ENCODE measurements at regions of chr11 and their contacts with region 1.

Region 1: GRCh38 chr11:77091146-77091940 is 11.3 kb upstream of the OMP start:
- DNase-seq: no peak
- H3K4me3 ChIP-seq: no peak overlapping the region
- H3K27me3 ChIP-seq: no peaks in the 10 kb centered on the region
- CTCF ChIP-seq: peak; percentile 93

Region 2: GRCh38 chr11:77039491-77040400 is 51.6 kb before region 1 on chr11:
- CTCF ChIA-PET with region 1: interaction called, 50 read pairs
- POLR2A ChIA-PET with region 1: no interaction called
- DNase-seq: no peak
- H3K4me3 ChIP-seq: peak overlapping the region; percentile 38
- H3K27me3 ChIP-seq: peaks cover 7% of the 10 kb centered on the region
- CTCF ChIP-seq: peak; percentile 69

Region 3: GRCh38 chr11:77053217-77054015 is 37.9 kb before region 1 on chr11:
- CTCF ChIA-PET with region 1: interaction called, 134 read pairs
- POLR2A ChIA-PET with region 1: no interaction called
- DNase-seq: no peak
- H3K4me3 ChIP-seq: no peak overlapping the region
- H3K27me3 ChIP-seq: peaks cover 2% of the 10 kb centered on the region
- CTCF ChIP-seq: no peak

Region 4: DNA sequence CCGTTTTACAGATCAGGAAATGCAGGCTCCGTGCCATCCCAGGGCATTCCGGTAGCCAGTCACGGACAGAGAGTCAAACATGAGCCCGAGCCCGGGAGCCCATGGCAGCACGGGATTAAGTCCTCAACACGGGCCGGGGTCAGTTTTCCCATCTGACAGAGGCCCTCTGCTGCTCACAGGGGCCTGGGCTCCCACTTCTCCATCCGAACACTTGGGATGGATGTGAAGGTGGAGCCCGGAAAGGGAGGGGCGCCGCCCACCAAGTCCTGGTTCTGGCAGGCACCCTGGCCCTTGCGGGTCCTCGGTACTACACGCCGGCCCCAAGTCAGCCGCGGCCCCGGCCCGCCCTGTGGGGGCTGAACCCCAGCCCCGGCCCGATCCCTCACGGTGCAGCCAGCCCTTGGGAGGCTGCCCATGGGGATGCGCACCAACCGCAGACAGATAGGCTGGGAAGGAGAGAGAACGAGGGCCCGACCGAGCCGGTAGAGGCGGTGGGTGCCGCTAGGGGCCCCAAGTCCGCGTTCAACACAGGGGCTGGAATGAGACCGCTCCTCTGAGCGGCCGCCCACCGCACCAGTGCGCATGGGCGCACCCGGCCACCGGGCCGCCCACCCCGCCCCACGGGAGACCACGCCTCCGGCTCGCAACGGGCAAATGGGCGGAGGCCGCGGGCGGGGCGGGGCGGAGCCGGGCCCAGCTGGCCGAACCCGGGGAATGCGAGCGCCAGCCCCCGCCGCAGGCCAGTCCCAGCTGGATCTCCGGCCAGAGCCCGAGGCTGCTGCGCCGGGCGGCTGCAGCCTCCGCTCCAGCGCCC is 24.9 kb before region 1 on chr11 and contains the start of gene CAPN5:
- CTCF ChIA-PET with region 1: interaction called, 86 read pairs
- POLR2A ChIA-PET with region 1: no interaction called
- DNase-seq: peak; percentile 57
- H3K4me3 ChIP-seq: peak within 1 kb of the TSS; percentile 75
- H3K27me3 ChIP-seq: no peaks in the 10 kb centered on the region
- CTCF ChIP-seq: peak; percentile 53
- polyA plus RNA-seq, gene CAPN5: 11.3 and 18.4 TPM in 2 replicates

Region 5: GRCh38 chr11:77073328-77074001 is 17.9 kb before region 1 on chr11:
- CTCF ChIA-PET with region 1: interaction called, 83 read pairs
- POLR2A ChIA-PET with region 1: no interaction called
- DNase-seq: peak; percentile 80
- H3K4me3 ChIP-seq: no peak overlapping the region
- H3K27me3 ChIP-seq: no peaks in the 10 kb centered on the region
- CTCF ChIP-seq: peak; percentile 86

Region 6: GRCh38 chr11:77113382-77114088 is 22.2 kb after region 1 on chr11:
- CTCF ChIA-PET with region 1: interaction called, 128 read pairs
- POLR2A ChIA-PET with region 1: no interaction called
- DNase-seq: no peak
- H3K4me3 ChIP-seq: no peak overlapping the region
- H3K27me3 ChIP-seq: no peaks in the 10 kb centered on the region
- CTCF ChIP-seq: peak; percentile 74

Measured in BJ (cell line).